Pancreas (tissue), 10 donors: ENCODE measurements at regions of chr21 and their contacts with region 1.

Region 1: DNA sequence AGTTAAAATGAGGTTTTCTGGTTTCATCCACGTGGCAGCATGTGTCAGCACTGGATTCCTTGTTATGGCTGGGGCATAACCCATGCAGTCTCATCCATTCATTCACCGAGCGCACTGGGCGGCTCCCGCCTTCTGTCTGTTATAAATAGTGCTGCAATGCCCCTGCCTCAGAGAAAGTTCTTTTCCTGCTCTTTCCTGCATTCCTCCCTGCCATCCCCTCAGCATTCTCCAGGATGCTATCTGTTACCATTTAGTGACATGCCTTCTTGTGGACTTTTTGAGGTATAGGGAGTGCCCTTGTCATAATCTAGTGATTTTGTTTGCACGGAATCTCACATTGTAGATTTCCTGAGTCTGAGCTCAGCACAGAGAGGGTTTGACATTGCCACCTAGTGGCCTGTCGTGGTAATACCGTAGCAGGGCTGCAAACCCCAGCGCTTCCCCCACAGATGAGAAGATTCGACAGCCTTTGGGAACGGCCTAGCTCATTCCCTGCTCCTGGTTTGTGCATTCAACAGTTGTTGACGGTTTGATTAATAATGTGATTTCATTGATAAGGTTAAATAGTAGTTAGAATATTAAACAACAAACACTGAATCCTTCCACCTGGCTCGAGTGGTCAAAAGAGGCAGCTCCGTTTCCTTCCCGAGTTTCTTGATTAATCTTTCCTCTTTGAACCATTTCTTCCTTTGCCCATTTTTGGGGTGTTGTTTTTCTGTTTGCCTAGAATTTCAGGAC is 46.3 kb downstream of the UMODL1 start:
- DNase-seq: peak; percentile 48 to 91 (median 80)
- ATAC-seq: peak; percentile 76 to 95 (median 89)
- H3K4me3 ChIP-seq: no peak overlapping the region
- H3K27ac ChIP-seq: no peak overlapping the region
- H3K4me1 ChIP-seq: no peaks in the 10 kb centered on the region
- H3K27me3 ChIP-seq: no peaks in the 10 kb centered on the region
- CTCF ChIP-seq: peak; percentile 91 to 97 (median 94)

Region 2: DNA sequence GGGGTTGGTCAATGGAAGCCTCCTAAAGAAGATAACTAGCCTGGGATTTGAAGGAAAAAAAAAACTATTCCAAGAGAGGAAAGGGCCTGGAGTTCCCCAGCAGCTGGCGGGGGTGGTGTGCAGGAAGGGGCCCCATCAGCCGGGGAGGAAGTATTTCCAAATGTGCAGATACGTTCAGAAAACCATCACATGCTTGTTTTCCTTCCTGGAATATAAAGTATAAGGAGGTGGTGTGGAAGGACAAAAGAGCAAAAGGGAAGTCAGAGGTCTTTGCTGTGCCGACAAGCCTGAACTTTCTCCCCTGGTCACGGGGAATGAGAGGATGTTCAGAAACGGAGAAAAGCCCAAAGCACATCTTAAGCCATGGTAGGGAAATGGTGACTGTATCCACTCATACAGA is 1021.4 kb before region 1 on chr21:
- intact Hi-C with region 1: no loop called
- DNase-seq: no peak
- ATAC-seq: no peak
- H3K4me3 ChIP-seq: no peak overlapping the region
- H3K27ac ChIP-seq: no peak overlapping the region
- H3K4me1 ChIP-seq: no peaks in the 10 kb centered on the region
- H3K27me3 ChIP-seq: no peaks in the 10 kb centered on the region
- CTCF ChIP-seq: no peak

Region 3: GRCh38 chr21:41612674-41613532 is 504.5 kb before region 1 on chr21:
- intact Hi-C with region 1: loop called in 2 of 3 experiments (anchors 10 kb)
- DNase-seq: peak; percentile 45 to 79 (median 68)
- ATAC-seq: peak; percentile 78 to 87 (median 84)
- H3K4me3 ChIP-seq: no peak overlapping the region
- H3K27ac ChIP-seq: peak overlapping the region; percentile 8 to 35 (median 20)
- H3K4me1 ChIP-seq: peaks cover 0 to 5% (median 0%) of the 10 kb centered on the region in 3 donors
- H3K27me3 ChIP-seq: no peaks in the 10 kb centered on the region
- CTCF ChIP-seq: peak; percentile 66 to 78 (median 73)

Region 4: GRCh38 chr21:41816220-41817165 is 300.9 kb before region 1 on chr21:
- intact Hi-C with region 1: loop called (anchors 5 to 10 kb)
- DNase-seq: peak in 5 of 6 donors; percentile 57 to 82 (median 71)
- ATAC-seq: peak; percentile 87 to 97 (median 95)
- H3K4me3 ChIP-seq: no peak overlapping the region
- H3K27ac ChIP-seq: no peak overlapping the region
- H3K4me1 ChIP-seq: peaks cover 0 to 6% (median 0%) of the 10 kb centered on the region in 3 donors
- H3K27me3 ChIP-seq: no peaks in the 10 kb centered on the region
- CTCF ChIP-seq: peak; percentile 41 to 71 (median 61)

Region 5: DNA sequence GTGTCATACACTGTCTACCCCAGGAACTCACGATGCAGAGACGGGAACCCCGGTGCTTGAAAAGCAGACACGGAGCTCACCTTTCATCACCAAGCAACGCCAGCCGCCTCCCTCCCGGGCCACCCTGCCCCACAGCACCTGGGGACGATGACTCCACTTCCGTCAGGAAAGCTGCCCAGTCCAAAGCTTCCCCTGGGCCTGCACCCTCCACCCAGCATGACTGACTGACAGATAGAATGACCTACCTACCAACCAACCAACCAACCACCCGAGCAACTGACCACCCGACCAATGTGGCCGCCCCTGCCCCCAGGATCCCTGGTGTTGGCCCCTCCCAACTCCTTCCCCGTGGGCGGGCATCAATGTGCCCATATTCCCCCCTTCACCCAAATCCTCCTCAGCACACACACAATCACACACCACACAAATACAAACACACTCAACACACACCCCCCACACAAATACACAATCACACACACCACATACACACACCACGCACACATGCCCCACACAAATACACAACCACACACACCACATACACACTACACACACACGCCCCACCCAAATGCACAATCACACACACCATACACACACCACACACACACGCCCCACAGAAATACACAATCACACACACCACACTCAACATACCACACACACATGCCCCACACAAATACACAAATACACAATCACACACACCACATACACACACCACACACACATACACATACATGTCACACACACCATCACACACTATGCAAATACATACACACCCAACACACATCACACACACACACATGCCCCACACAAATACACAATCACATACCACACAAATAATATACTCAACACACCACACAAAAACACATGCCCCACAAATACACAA is 288.7 kb before region 1 on chr21:
- intact Hi-C with region 1: loop called in 1 of 3 experiments (anchors 10 kb)
- DNase-seq: no peak
- ATAC-seq: no peak
- H3K4me3 ChIP-seq: no peak overlapping the region
- H3K27ac ChIP-seq: no peak overlapping the region
- H3K4me1 ChIP-seq: no peaks in the 10 kb centered on the region
- H3K27me3 ChIP-seq: no peaks in the 10 kb centered on the region
- CTCF ChIP-seq: no peak

Region 6: DNA sequence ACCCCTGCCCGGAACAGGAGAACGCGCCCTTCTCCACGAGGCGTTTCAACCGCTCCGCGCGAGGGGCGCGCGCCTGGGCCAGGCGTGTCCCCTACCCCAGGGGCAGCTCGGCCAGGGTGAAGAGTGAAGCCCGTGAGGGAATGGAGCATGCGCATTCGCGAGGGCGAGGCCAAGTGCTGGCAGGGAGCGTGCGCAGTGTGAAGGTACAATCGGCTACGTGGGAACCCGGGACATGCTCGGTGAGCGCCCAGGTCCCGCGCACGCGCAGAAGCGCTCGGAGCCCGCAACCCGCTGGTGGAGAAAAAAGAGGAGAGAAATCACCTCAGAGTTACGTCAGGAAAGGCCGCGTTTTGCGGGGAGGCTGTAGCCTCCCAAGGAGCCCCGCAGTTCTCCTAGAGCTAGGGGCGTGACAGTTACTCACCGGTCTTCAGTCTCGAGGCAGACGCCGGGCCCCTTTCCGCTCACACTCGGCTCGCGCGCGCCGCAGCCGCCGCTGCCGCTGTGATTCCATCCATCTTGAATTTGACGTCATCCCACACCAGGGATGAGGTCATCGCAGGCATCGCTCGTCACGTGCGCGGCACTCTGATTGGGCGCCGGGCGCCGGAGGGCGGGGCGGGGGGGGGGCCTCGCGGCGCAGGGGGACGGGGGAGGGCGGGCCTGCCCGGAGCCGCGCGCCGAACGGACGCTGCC is 107.4 kb before region 1 on chr21 and contains the start of gene ZBTB21:
- intact Hi-C with region 1: loop called in 1 of 3 experiments (anchors 5 kb)
- DNase-seq: peak; percentile 97 to 100 (median 99)
- ATAC-seq: peak; percentile 87 to 96 (median 92)
- H3K4me3 ChIP-seq: peak within 1 kb of the TSS; percentile 69 to 93 (median 82)
- H3K27ac ChIP-seq: peak within 1 kb of the TSS; percentile 95 to 100 (median 98)
- H3K4me1 ChIP-seq: peaks cover 6 to 9% (median 6%) of the 10 kb centered on the region in 3 donors
- H3K27me3 ChIP-seq: no peaks in the 10 kb centered on the region
- CTCF ChIP-seq: no peak
- total RNA-seq, gene ZBTB21: 4.8 to 9.5 (median 8.0) TPM

Region 7: GRCh38 chr21:42021366-42022090 is 95.9 kb before region 1 on chr21:
- intact Hi-C with region 1: loop called in 1 of 3 experiments (anchors 10 kb)
- DNase-seq: peak in 1 of 6 donors; percentile 28
- ATAC-seq: peak; percentile 43 to 78 (median 74)
- H3K4me3 ChIP-seq: no peak overlapping the region
- H3K27ac ChIP-seq: no peak overlapping the region
- H3K4me1 ChIP-seq: no peaks in the 10 kb centered on the region
- H3K27me3 ChIP-seq: no peaks in the 10 kb centered on the region
- CTCF ChIP-seq: no peak